CD4-positive, alpha-beta T cell (primary cell): ENCODE measurements at regions of chr12 and their contacts with region 1.

Region 1: DNA sequence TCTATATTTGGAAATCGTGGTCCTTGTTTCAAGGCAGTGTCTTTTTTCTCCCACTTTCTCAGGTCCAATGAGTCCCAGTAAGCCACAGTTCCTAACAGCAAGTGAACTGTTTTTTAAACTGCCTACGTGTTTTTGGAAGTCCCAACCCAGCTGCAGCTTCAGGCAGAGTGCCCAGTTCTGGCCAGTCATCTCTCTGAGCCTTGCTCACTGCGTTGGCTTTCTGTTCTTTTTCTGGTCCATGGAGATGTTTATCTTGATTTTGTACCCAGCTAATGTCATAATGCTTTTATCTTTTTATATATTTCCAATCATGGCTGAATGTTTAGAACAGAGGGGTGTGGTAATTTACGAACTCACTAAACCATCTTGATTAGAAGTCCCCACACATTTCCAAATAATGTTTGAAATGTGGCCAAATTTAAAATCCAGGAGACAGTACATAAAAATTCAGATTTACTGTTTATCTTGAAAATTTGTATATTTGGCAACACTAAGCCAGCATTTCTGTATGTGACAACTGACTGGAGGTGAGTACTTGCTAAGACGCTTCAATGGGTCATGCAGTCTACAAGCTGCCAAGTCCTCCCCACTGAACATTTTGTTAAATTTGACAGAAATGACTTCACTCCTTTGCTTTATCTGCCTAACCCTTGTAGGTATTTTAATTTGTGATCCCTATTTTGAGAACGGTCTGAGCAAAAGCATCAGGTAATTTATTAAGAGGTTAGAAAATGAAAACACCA is 46.1 kb upstream of the OTOGL start:
- DNase-seq: no peak
- ATAC-seq: no peak
- H3K4me3 ChIP-seq: no peak overlapping the region
- H3K4me3 Mint-ChIP-seq: no peak overlapping the region
- H3K27ac ChIP-seq: no peak overlapping the region
- H3K27ac Mint-ChIP-seq: no peak overlapping the region
- H3K4me1 ChIP-seq: no peaks in the 10 kb centered on the region
- H3K4me1 Mint-ChIP-seq: no peaks in the 10 kb centered on the region
- H3K27me3 ChIP-seq: no peaks in the 10 kb centered on the region
- H3K27me3 Mint-ChIP-seq: peaks cover 10% of the 10 kb centered on the region
- CTCF ChIP-seq: no peak

Region 2: GRCh38 chr12:80186727-80187217 is 133.6 kb after region 1 on chr12:
- CTCF ChIA-PET with region 1: no interaction called
- POLR2A ChIA-PET with region 1: no interaction called
- intact Hi-C with region 1: loop called (anchors 5 to 10 kb)
- DNase-seq: peak in 7 of 14 experiments; percentile 1 to 63 (median 13)
- ATAC-seq: peak; percentile 71
- H3K4me3 ChIP-seq: no peak overlapping the region
- H3K4me3 Mint-ChIP-seq: no peak overlapping the region
- H3K27ac ChIP-seq: no peak overlapping the region
- H3K27ac Mint-ChIP-seq: no peak overlapping the region
- H3K4me1 ChIP-seq: no peaks in the 10 kb centered on the region
- H3K4me1 Mint-ChIP-seq: no peaks in the 10 kb centered on the region
- H3K27me3 ChIP-seq: no peaks in the 10 kb centered on the region
- H3K27me3 Mint-ChIP-seq: peaks cover 5% of the 10 kb centered on the region
- CTCF ChIP-seq: peak; percentile 56

Region 3: DNA sequence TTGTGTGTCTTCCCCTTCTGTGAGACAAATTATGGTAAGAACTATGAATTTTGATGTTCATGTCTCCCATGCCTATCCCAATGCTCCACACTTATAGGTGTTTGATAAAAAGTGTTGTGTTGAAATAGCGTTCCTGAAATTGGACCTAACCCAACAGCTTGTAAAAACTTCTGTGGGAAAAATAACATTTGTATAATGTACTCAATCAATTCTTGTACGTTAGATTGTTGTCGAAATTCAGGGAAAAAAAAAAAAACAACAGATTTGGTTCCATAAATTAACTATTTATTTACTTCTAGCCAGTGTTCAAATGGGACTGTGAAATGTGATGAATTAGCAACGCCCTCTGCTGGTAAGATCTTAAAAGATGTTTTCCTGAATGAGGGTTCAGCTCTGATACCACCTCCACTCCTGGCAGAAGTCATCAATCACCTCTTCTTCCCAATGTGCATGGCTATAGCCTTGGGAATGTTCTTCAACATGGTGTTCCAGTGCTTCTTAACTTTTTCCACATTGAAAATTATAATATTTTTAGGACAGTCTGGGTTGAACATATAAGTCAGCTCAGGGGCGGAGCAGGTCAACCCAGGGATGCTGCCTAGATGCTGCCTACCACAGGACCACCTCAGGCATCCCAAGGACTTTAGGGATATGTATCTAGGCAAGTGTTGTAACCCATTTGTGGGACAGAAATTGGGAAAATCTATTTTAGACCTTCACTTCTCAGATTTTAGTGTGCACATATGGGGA is 216.8 kb after region 1 on chr12:
- CTCF ChIA-PET with region 1: no interaction called
- POLR2A ChIA-PET with region 1: no interaction called
- intact Hi-C with region 1: loop called (anchors 5 to 10 kb)
- DNase-seq: peak in 3 of 14 experiments; percentile 26 to 36 (median 34)
- ATAC-seq: no peak
- H3K4me3 ChIP-seq: no peak overlapping the region
- H3K4me3 Mint-ChIP-seq: no peak overlapping the region
- H3K27ac ChIP-seq: no peak overlapping the region
- H3K27ac Mint-ChIP-seq: no peak overlapping the region
- H3K4me1 ChIP-seq: no peaks in the 10 kb centered on the region
- H3K4me1 Mint-ChIP-seq: no peaks in the 10 kb centered on the region
- H3K27me3 ChIP-seq: no peaks in the 10 kb centered on the region
- H3K27me3 Mint-ChIP-seq: peaks cover 17% of the 10 kb centered on the region
- CTCF ChIP-seq: peak; percentile 71